Heart right ventricle (tissue), 16 donors: ENCODE measurements at regions of chr13 and their contacts with region 1.

Region 1: DNA sequence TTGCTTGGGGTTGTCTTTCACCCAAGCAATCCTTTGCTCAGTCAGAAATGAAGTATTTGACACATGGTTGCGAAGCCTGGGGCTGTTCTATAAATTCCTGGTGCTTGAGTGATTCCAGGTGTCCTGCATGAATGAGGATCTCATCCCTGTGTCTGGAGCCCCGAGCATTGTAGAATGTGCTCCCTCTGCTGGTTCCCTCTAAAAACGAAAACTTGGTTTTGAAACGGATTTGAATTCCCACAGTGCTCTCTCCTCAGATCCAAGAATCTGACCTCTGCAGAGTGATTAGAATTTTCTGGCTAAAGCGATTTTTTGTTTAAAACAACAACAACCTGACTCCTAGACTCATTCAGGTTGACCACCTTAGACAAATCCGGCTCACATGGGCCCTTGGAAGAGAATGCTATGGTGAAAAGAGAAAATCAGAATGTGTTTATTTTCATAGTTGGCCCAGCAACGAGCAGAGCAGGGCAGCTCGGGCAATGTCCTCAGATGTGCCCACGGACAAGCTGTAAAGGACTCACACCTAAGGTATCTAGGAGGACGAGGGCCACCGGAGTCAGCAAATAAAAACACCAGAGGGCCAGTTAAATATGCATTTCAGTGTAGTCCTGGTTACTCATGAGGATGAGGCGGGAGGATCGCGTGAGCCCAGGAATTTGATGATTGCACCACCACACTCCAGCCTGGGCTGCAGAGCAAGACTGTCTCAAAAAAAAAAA is 8.7 kb upstream of the ATP12A start:
- DNase-seq: peak in 1 of 2 donors; percentile 16
- ATAC-seq: peak; percentile 57 to 80 (median 72)
- H3K4me3 ChIP-seq: peak overlapping the region in 3 of 10 donors; percentile 10 to 22 (median 12)
- H3K27ac ChIP-seq: no peak overlapping the region
- H3K4me1 ChIP-seq: peaks cover 0 to 12% (median 7%) of the 10 kb centered on the region in 9 donors
- H3K27me3 ChIP-seq: peaks cover 0 to 31% (median 5%) of the 10 kb centered on the region in 7 donors
- CTCF ChIP-seq: peak; percentile 18 to 72 (median 60)

Region 2: GRCh38 chr13:24313439-24313838 is 358.1 kb before region 1 on chr13:
- intact Hi-C with region 1: loop called in 1 of 10 experiments (anchors 5 kb)
- DNase-seq: no peak
- ATAC-seq: peak in 3 of 8 donors; percentile 38 to 47 (median 46)
- H3K4me3 ChIP-seq: no peak overlapping the region
- H3K27ac ChIP-seq: peak overlapping the region in 2 of 10 donors; percentile 3
- H3K4me1 ChIP-seq: peaks cover 0 to 27% (median 8%) of the 10 kb centered on the region in 9 donors
- H3K27me3 ChIP-seq: no peaks in the 10 kb centered on the region
- CTCF ChIP-seq: peak in 8 of 9 donors; percentile 11 to 67 (median 46)

Region 3: GRCh38 chr13:24574847-24575246 is 96.7 kb before region 1 on chr13:
- intact Hi-C with region 1: loop called in 4 of 10 experiments (anchors 10 kb)
- DNase-seq: no peak
- ATAC-seq: no peak
- H3K4me3 ChIP-seq: no peak overlapping the region
- H3K27ac ChIP-seq: no peak overlapping the region
- H3K4me1 ChIP-seq: no peaks in the 10 kb centered on the region
- H3K27me3 ChIP-seq: peaks cover 0 to 7% (median 0%) of the 10 kb centered on the region in 7 donors
- CTCF ChIP-seq: no peak